PC-3 (cell line): ENCODE measurements at regions of chr15 and their contacts with region 1.

Region 1: DNA sequence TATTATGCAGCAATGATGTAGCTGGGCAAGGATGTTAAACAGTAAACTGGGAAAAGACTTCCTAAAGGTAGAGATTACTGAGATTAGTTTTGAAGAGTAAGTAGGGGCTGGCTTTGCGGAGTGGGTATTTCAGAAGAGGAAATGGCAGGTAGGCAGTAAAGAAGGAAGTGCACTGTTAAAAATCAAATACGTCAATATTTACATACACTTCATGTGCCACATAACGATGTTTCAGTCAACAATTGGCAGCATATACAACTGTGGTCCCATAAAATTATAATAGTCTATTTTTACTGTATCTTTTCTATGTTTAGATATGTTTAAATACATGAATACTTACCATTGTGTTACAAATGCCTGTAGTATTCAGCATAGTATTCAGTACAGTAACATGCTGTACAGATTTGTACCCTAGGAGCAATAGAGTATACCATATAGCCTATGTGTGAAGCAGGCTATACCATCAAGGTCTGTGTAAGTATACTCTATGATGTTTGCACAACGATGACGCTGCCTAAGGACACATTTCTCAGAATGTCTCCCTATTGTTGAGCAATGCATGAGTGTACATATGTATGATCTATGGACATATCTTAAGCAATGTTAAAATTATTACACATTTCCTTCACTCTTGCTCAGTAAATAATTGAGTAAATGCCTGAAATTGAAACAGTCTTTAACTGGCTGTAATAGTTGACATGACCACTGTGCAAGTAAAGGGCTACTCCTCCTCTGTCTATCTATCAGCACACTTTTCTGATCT is 196.7 kb downstream of the ISL2 start:
- DNase-seq: peak; percentile 94
- ATAC-seq: peak; percentile 96
- H3K4me3 ChIP-seq: no peak overlapping the region
- H3K27ac ChIP-seq: peak overlapping the region; percentile 73
- H3K4me1 ChIP-seq: peaks cover 18% of the 10 kb centered on the region
- H3K27me3 ChIP-seq: no peaks in the 10 kb centered on the region
- CTCF ChIP-seq: no peak

Region 2: GRCh38 chr15:76756381-76756780 is 223.1 kb after region 1 on chr15:
- CTCF ChIA-PET with region 1: no interaction called
- POLR2A ChIA-PET with region 1: no interaction called
- intact Hi-C with region 1: loop called (anchors 10 kb)
- DNase-seq: no peak
- ATAC-seq: no peak
- H3K4me3 ChIP-seq: no peak overlapping the region
- H3K27ac ChIP-seq: no peak overlapping the region
- H3K4me1 ChIP-seq: peaks cover 12% of the 10 kb centered on the region
- H3K27me3 ChIP-seq: no peaks in the 10 kb centered on the region
- CTCF ChIP-seq: no peak

Region 3: GRCh38 chr15:76799760-76800159 is 266.5 kb after region 1 on chr15:
- CTCF ChIA-PET with region 1: no interaction called
- POLR2A ChIA-PET with region 1: interaction called, 10 read pairs
- intact Hi-C with region 1: no loop called
- DNase-seq: peak; percentile 50
- ATAC-seq: no peak; the same call in 1 of the 2 replicates
- H3K4me3 ChIP-seq: no peak overlapping the region
- H3K27ac ChIP-seq: no peak overlapping the region
- H3K4me1 ChIP-seq: no peaks in the 10 kb centered on the region
- H3K27me3 ChIP-seq: no peaks in the 10 kb centered on the region
- CTCF ChIP-seq: no peak